ENCODE measurements at regions of chr19 and their contacts with region 1.

Region 1: GRCh38 chr19:17052439-17053210 is 22.6 kb downstream of the HAUS8 start:
- DNase-seq: peak; percentile 57 to 61
- H3K4me3 ChIP-seq: no peak overlapping the region
- H3K27ac ChIP-seq: no peak overlapping the region
- H3K4me1 ChIP-seq: peaks cover 12% of the 10 kb centered on the region
- H3K27me3 ChIP-seq: no peaks in the 10 kb centered on the region
- CTCF ChIP-seq: peak; percentile 89

Region 2: GRCh38 chr19:16771618-16772017 is 281.0 kb before region 1 on chr19:
- CTCF ChIA-PET with region 1: interaction called, 6 read pairs
- POLR2A ChIA-PET with region 1: no interaction called
- intact Hi-C with region 1: loop called (anchors 1 kb)
- DNase-seq: peak; percentile 68
- H3K4me3 ChIP-seq: no peak overlapping the region
- H3K27ac ChIP-seq: no peak overlapping the region
- H3K4me1 ChIP-seq: peaks cover 10% of the 10 kb centered on the region; the same call in 1 of the 2 replicates
- H3K27me3 ChIP-seq: no peaks in the 10 kb centered on the region
- CTCF ChIP-seq: peak; percentile 97

Region 3: GRCh38 chr19:17021793-17022583 is 30.6 kb before region 1 on chr19:
- CTCF ChIA-PET with region 1: interaction called, 11 read pairs
- POLR2A ChIA-PET with region 1: no interaction called
- intact Hi-C with region 1: no loop called
- DNase-seq: peak; percentile 83 to 99
- H3K4me3 ChIP-seq: peak overlapping the region; percentile 29; the same call in 1 of the 2 replicates
- H3K27ac ChIP-seq: peak overlapping the region; percentile 57
- H3K4me1 ChIP-seq: peaks cover 59% of the 10 kb centered on the region
- H3K27me3 ChIP-seq: no peaks in the 10 kb centered on the region
- CTCF ChIP-seq: no peak

Region 4: DNA sequence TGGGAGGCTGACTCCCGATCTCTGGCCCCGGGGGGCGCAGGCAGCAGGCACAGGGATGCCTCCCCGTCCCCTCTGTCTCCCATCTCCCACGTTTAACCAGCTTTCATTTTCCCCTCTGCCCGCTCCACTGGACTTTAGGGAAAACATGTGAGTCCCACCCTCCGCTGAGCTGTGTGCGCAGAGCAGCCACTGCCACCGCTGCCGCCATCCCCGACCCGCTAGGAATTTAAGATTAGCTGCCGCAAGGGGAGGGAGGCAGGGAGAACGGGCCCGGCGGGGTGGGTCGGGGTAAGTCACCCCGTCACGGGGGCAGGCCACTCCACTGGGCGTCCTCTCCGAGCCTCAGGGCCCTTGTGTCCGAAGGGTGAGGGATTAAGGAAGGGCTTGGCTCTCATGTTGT is 929.8 kb after region 1 on chr19:
- CTCF ChIA-PET with region 1: interaction called, 12 read pairs
- POLR2A ChIA-PET with region 1: no interaction called
- intact Hi-C with region 1: no loop called
- DNase-seq: no peak
- H3K4me3 ChIP-seq: no peak overlapping the region
- H3K27ac ChIP-seq: no peak overlapping the region
- H3K4me1 ChIP-seq: no peaks in the 10 kb centered on the region
- H3K27me3 ChIP-seq: peaks cover 11% of the 10 kb centered on the region
- CTCF ChIP-seq: no peak